Posterior cingulate gyrus (tissue), 11 donors: ENCODE measurements at regions of chr1 and their contacts with region 1.

Region 1: GRCh38 chr1:194366705-194367104 is 1180.3 kb upstream of the B3GALT2 start:
- DNase-seq: no peak

Region 2: GRCh38 chr1:194151056-194151455 is 215.6 kb before region 1 on chr1:
- intact Hi-C with region 1: no loop called
- DNase-seq: no peak

Region 3: GRCh38 chr1:194410756-194411155 is 44.1 kb after region 1 on chr1:
- intact Hi-C with region 1: loop called (anchors 1 kb)
- DNase-seq: no peak